ENCODE measurements at regions of chr10 and their contacts with region 1.

Region 1: GRCh38 chr10:105949721-105950120 is 1214.8 kb downstream of the SORCS1 start:
- DNase-seq: no peak
- H3K4me3 ChIP-seq: no peak overlapping the region
- H3K27ac ChIP-seq: no peak overlapping the region
- H3K4me1 ChIP-seq: no peaks in the 10 kb centered on the region
- H3K27me3 ChIP-seq: no peaks in the 10 kb centered on the region
- CTCF ChIP-seq: no peak
- POLR2A ChIP-seq: no peak

Region 2: DNA sequence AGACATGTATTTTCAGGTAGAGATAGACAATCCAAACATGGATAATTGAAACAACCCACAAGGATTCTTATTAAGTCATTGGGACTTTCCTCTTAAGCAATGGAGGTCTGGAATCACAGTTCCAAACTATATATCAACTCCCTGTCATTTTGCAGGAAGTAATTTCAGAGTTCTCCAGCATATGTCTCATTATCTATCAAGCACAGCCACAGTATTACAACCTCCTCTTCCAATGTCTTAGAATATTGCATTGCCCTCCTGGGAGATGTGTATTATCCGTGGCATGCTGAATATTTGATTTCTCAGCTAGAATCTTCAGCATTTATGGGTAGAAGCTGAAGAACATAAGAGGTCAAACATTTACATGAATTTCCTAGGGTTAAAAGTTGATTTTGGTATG is 41.0 kb before region 1 on chr10:
- intact Hi-C with region 1: no loop called
- DNase-seq: no peak
- H3K4me3 ChIP-seq: no peak overlapping the region
- H3K27ac ChIP-seq: no peak overlapping the region
- H3K4me1 ChIP-seq: no peaks in the 10 kb centered on the region
- H3K27me3 ChIP-seq: no peaks in the 10 kb centered on the region
- CTCF ChIP-seq: no peak
- POLR2A ChIP-seq: no peak

Region 3: GRCh38 chr10:106175760-106176377 is 226.1 kb after region 1 on chr10:
- intact Hi-C with region 1: loop called in 1 of 2 experiments (anchors 10 kb)
- DNase-seq: no peak
- H3K4me3 ChIP-seq: no peak overlapping the region
- H3K27ac ChIP-seq: no peak overlapping the region
- H3K4me1 ChIP-seq: no peaks in the 10 kb centered on the region
- H3K27me3 ChIP-seq: no peaks in the 10 kb centered on the region
- CTCF ChIP-seq: peak in 4 of 6 experiments; percentile 21 to 47 (median 39)
- POLR2A ChIP-seq: no peak

Region 4: DNA sequence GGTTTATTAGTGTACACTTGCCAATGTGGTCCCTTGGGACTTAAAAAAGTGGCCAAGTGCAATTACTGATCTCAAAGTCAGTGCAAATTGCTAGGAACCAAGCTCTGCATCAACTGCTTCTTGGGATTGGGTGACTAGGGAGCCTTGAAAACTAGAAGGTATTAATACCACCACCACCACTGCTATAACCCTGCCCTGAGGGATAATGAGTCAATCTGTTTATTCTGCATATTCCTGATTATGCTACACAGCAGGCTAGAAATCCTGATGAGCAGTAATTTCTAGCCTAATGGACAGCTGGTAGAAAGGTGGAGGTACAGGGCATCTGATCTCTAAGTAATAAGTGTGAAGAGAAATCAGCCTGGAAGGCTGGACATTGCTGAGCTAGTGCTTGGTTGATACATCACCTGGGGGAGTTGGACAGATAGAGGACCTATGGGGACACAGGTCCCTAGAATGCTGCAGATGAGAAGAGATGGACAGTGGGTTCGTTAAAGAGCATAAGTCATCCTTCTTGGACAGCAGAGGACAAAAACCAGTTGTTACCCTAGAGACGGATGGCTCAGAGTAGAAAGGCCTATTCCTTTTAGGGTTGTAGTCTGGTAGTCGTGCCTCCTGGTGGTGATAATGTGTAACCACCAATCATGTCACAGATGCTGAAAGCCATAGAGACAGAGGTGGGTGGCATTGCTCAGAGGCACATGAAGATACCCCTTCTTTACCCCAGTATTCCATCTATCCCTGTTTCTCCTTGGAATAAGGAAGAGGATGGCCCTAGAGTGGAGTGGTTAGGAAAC is 659.9 kb after region 1 on chr10:
- intact Hi-C with region 1: no loop called
- DNase-seq: no peak
- H3K4me3 ChIP-seq: no peak overlapping the region
- H3K27ac ChIP-seq: no peak overlapping the region
- H3K4me1 ChIP-seq: no peaks in the 10 kb centered on the region
- H3K27me3 ChIP-seq: no peaks in the 10 kb centered on the region
- CTCF ChIP-seq: no peak
- POLR2A ChIP-seq: no peak